Activated CD8-positive, alpha-beta T cell treated with anti-CD3 and anti-CD28 coated beads, Interleukin-2, amount 10 ng/mL, durations not matched to agents 7 days and 5 days (primary cell): ENCODE measurements at regions of chr22 and their contacts with region 1.

Region 1: GRCh38 chr22:37260901-37261336 is 16.9 kb upstream of the RAC2 start:
- DNase-seq: peak; percentile 75
- ATAC-seq: peak; percentile 73
- H3K4me3 Mint-ChIP-seq: no peak overlapping the region
- H3K27ac Mint-ChIP-seq: peak overlapping the region; percentile 50
- H3K4me1 Mint-ChIP-seq: peaks cover 26% of the 10 kb centered on the region
- H3K27me3 Mint-ChIP-seq: peaks cover 4% of the 10 kb centered on the region

Region 2: DNA sequence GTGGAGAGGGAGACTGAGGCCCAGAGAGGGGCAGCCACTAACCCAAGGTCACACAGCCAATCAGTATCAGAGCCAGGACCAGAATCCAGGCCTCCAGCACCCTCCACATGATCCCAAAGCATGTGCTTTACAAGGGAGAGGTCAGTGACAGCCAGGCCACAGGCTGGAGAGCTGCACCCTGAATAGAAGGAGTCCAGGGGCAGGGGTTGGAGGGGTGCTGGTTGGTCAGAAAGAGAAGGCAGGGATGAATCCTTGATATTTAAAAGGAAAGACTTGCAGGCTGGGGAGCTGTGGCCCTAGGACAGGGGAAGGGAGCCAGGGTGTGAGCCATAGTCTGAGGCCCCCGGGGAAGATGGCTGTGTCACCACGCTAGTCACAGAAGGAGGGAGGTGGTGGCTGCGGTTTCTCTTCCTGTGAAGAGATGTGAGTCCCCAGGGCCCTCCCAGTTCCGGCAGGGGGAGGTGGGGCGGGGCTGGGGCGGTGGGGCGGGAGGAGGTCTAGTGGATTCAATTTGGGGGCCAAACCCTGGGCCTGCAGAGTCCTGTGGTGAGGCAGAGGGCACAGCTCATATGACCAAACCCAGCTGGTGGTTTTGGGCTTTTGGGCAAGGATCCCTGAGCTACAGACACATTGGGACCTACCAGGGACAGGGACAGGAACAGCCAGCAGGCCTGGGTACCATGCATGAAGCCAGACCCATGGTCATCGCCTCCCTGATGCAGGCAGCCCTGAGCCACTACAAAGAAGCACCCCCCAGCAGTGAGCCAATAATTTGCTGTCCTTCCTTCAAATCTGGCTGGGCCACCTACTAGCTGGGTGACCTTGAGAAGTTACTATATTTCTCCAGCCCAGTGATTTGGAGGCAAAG is 30.9 kb before region 1 on chr22:
- CTCF ChIA-PET with region 1: interaction called, 47 read pairs
- POLR2A ChIA-PET with region 1: interaction called, 5 read pairs
- DNase-seq: peak; percentile 97
- ATAC-seq: peak; percentile 76
- H3K4me3 Mint-ChIP-seq: peak overlapping the region; percentile 80
- H3K27ac Mint-ChIP-seq: peak overlapping the region; percentile 100
- H3K4me1 Mint-ChIP-seq: peaks cover 90% of the 10 kb centered on the region
- H3K27me3 Mint-ChIP-seq: no peaks in the 10 kb centered on the region

Region 3: GRCh38 chr22:37273126-37273845 is 12.4 kb after region 1 on chr22:
- CTCF ChIA-PET with region 1: interaction called, 41 read pairs
- POLR2A ChIA-PET with region 1: no interaction called
- DNase-seq: peak; percentile 43
- ATAC-seq: peak; percentile 63
- H3K4me3 Mint-ChIP-seq: no peak overlapping the region
- H3K27ac Mint-ChIP-seq: peak overlapping the region; percentile 43
- H3K4me1 Mint-ChIP-seq: peaks cover 59% of the 10 kb centered on the region
- H3K27me3 Mint-ChIP-seq: peaks cover 10% of the 10 kb centered on the region

Region 4: GRCh38 chr22:37282385-37282677 is 21.4 kb after region 1 on chr22 and contains the start of gene CYTH4:
- CTCF ChIA-PET with region 1: interaction called, 23 read pairs
- POLR2A ChIA-PET with region 1: no interaction called
- DNase-seq: peak; percentile 86
- ATAC-seq: peak; percentile 89
- H3K4me3 Mint-ChIP-seq: peak within 1 kb of the TSS; percentile 84
- H3K27ac Mint-ChIP-seq: peak within 1 kb of the TSS; percentile 98
- H3K4me1 Mint-ChIP-seq: peaks cover 70% of the 10 kb centered on the region
- H3K27me3 Mint-ChIP-seq: peaks cover 7% of the 10 kb centered on the region
- total RNA-seq, gene CYTH4: 107 to 114 TPM

Region 5: DNA sequence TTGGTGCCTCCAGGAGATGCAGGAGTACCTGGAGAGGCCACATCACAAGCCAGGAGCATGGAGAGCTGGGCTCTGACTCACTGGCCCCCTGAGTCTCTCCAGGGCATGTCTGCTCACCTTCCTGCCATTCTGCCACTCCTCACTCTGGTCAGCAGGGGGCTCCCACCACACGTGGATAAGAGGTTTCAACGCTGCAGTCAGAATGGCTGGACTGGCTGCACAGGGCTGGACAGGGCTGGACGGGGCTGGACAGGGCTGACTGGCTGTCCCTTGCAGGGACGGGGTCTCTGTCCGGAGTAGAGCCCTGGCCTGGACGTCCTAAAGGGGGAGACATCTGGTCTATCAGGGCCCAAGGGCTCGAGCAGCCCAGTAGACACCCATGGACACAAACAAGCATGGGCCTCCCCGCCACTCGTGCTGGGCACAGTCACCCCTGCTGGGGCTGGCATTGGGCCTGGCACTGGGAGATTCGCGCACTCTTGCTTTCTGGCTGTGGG is 56.0 kb after region 1 on chr22:
- CTCF ChIA-PET with region 1: interaction called, 29 read pairs
- POLR2A ChIA-PET with region 1: interaction called, 4 read pairs
- DNase-seq: peak; percentile 84
- ATAC-seq: peak; percentile 85
- H3K4me3 Mint-ChIP-seq: no peak overlapping the region
- H3K27ac Mint-ChIP-seq: peak overlapping the region; percentile 30
- H3K4me1 Mint-ChIP-seq: peaks cover 47% of the 10 kb centered on the region
- H3K27me3 Mint-ChIP-seq: peaks cover 7% of the 10 kb centered on the region

Region 6: DNA sequence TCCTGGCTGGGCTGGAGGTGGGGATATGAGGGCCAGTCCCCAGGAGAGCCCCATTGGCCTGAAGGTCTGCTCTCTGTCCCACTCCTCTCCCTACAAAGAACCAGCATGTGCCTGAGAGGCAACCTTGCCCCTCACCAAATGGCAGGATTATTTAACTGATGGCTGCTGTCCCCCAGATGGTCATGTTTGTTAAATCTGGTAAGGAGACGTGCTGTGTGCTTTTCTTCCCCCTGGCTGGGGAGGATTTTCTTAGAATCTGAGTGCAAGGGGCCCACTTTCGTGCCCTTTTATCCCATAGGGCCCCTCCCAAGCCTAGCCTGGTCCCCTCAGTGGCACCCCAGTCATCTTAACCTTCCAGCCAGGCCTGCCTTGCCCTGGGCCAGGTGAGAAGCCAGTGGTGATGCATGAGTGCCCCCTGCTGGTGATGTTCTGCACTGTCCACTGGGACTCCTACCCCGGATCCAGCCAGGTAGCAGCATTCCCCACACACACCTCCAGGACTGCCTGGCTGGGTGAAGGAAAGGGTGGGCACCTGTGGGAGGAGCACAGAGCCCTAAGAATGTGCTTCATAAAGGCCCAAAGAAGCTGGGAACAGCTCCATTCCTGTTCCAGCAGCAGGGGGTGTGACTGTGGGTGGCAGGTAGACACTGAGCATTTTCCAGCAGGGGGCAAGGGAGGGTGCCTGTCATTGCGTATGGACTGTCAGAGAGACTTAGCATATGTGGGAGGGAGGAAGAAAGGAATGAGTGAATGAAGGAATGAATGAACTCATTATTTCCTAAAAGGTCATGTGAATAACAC is 196.4 kb after region 1 on chr22:
- CTCF ChIA-PET with region 1: interaction called, 18 read pairs
- POLR2A ChIA-PET with region 1: no interaction called
- DNase-seq: peak; percentile 89
- ATAC-seq: peak; percentile 98
- H3K4me3 Mint-ChIP-seq: no peak overlapping the region
- H3K27ac Mint-ChIP-seq: no peak overlapping the region
- H3K4me1 Mint-ChIP-seq: peaks cover 5% of the 10 kb centered on the region
- H3K27me3 Mint-ChIP-seq: no peaks in the 10 kb centered on the region